Stomach (tissue), 19 donors: ENCODE measurements at regions of chr20 and their contacts with region 1.

Region 1: DNA sequence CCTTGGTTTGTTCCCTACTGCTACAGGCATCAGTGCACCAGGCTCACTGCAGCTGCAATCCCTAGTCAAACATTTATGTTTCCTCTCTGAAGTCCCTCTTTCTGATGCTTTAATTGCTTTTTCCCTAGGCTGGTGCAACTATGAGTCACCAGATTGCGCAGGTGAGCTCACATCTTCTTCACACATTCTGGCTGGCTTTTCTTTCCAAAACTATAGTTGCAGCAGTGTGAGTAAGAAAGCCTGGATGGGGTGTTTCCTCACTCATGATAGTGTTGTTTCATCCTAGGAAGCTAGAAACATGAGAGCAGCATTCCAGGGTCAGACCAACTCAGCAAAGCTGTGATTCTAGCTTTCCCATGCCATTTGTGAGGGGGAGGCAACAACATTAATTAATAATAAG is 296.4 kb downstream of the PAX1 start:
- DNase-seq: no peak
- H3K4me3 ChIP-seq: no peak overlapping the region
- H3K27ac ChIP-seq: no peak overlapping the region
- H3K4me1 ChIP-seq: no peaks in the 10 kb centered on the region
- H3K27me3 ChIP-seq: no peaks in the 10 kb centered on the region
- CTCF ChIP-seq: no peak
- EP300 ChIP-seq: no peak
- POLR2A ChIP-seq: no peak

Region 2: DNA sequence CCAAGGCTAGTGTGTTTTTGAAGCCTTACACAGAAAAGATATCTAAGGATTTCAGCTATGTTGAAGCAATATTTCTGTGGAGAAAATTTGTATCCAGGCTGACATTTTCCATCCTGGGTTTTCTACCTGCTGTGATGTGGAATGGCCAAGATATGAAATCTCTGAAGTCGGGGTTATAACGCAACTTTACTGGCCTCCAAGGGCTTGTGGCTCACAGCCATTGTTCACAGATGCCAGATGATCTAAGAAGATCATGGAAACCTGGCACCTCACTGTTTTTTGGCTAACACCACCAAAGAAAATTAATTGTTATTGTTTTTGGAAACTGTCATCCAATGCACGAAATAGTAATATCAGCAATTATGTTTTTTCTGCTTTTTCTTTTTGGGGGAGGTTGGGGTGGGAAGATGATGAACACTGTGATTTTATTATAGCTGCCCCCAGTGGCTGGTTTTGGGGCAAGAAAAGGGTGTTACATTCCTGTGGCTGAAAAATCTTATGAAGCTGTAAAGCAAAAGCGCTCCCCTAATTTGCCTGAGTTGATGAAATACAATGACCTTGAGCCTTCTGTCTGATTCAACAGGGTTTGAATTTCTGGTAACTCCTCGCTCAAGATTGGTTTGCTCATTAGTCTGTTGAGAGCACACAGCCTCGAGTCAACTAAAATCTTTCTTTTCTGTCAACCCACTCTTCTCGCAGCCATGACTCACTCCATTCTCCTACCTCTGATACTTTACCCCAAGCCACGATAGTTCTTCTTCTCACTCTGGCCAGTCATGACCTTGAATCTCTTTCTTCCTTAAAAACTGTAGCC is 59.7 kb before region 1 on chr20:
- intact Hi-C with region 1: loop called (anchors 10 kb)
- DNase-seq: no peak
- H3K4me3 ChIP-seq: no peak overlapping the region
- H3K27ac ChIP-seq: no peak overlapping the region
- H3K4me1 ChIP-seq: no peaks in the 10 kb centered on the region
- H3K27me3 ChIP-seq: no peaks in the 10 kb centered on the region
- CTCF ChIP-seq: no peak
- EP300 ChIP-seq: no peak
- POLR2A ChIP-seq: no peak

Region 3: GRCh38 chr20:22070610-22071058 is 68.7 kb after region 1 on chr20:
- intact Hi-C with region 1: no loop called
- DNase-seq: peak in 1 of 2 donors; percentile 46
- H3K4me3 ChIP-seq: no peak overlapping the region
- H3K27ac ChIP-seq: no peak overlapping the region
- H3K4me1 ChIP-seq: no peaks in the 10 kb centered on the region
- H3K27me3 ChIP-seq: no peaks in the 10 kb centered on the region
- CTCF ChIP-seq: no peak
- EP300 ChIP-seq: no peak
- POLR2A ChIP-seq: no peak